Left colon (tissue), 2 donors: ENCODE measurements at regions of chr19 and their contacts with region 1.

Region 1: DNA sequence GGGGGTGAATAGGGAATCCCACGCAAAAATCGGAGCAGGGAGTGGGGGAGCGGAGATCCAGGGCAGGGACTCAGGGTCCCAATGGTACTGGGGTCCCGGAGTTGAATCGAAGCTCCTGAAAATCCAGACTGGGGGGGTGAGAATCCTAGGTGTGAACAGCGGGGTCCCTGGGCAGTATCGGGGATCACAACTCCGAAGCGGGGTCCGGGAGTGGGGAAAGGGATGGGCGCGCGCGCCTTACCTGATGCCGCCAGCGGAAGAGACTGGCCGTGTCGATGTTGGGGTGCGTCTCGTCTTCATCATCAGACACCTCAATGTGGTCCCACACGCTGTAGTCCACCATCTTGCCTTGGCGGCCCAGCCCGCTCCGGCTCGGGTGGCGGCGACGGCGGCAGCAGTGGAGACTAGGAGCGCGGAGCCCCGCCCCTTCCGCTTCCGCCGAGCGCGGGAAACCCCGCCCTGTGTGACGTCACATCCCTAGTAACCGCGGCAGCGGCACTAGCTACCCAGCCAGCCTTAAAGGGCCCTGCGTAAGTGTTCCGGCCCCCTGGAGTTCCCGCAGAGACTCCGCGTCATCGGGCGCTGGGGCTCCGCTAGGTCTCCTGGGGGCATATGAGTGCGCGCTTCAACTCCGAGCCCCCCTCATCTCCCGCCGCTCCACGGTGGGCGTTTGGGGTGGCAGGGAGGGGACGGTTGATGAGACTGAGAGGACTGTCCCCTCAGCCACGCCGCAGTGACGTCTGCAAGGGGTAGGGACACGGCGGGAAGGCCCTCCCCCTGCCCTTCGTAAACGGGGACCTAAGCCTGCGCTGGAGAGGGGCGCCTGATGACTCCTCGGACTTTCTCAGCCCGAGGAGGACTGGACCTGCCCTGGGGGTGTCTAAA is at the start of gene CDC37:
- DNase-seq: peak; percentile 95 to 99
- ATAC-seq: peak; percentile 90
- total RNA-seq, gene CDC37: 129 to 161 TPM

Region 2: DNA sequence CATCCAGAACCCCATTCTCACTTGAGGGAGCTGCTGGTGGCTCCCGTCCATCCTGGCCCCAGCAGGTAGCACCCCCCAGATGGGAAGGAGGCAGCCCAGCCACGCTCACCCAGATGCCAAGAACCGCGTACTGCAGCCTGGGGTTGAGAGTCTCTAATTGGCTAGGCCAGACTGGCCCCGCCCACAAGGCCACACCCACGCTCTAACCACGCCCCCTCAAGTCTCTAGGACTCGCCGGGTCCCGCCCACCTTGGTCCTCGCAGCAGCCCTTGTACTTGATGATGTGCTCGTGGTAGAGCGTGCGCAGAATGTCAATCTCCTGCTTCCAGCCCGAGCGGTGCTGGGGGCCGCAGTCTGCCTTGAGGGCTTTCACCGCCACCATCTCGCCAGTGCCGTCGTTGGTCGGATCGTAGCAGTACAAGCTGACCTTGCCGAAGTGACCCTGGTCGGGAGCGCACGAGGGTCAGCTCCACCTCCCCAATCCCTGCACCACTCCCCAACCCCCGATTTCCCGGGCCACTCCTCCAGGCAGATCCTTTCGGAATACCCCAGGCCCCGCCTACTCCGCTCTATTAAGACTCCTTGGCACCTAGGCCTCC is 49.5 kb before region 1 on chr19:
- intact Hi-C with region 1: no loop called
- DNase-seq: no peak
- ATAC-seq: peak; percentile 30

Region 3: GRCh38 chr19:10454267-10454666 is 50.9 kb after region 1 on chr19:
- intact Hi-C with region 1: no loop called
- DNase-seq: no peak
- ATAC-seq: no peak

Region 4: DNA sequence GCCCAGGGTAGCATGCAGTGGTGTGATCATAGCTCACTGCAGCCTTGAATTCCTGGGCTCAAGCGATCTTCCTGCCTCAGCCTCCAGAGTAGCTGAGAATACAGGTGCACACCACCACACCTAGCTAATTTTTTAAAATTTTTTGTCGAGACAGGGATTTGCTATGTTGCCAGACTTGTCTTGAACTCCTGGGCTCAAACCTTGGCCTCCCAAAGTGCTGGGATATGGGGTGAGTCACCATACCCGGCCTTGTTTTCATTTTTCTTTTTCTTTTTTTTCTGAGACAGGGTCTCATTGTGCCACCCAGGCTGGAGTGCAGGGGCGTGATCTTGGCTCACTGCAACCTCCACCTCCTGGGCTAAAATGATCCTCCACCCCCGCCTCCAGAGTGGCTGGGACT is 61.1 kb after region 1 on chr19:
- intact Hi-C with region 1: no loop called
- DNase-seq: no peak
- ATAC-seq: no peak

Region 5: GRCh38 chr19:10478903-10479384 is 75.6 kb after region 1 on chr19:
- intact Hi-C with region 1: loop called in 1 of 2 experiments (anchors 10 kb)
- DNase-seq: peak; percentile 85 to 90
- ATAC-seq: peak; percentile 82

Region 6: DNA sequence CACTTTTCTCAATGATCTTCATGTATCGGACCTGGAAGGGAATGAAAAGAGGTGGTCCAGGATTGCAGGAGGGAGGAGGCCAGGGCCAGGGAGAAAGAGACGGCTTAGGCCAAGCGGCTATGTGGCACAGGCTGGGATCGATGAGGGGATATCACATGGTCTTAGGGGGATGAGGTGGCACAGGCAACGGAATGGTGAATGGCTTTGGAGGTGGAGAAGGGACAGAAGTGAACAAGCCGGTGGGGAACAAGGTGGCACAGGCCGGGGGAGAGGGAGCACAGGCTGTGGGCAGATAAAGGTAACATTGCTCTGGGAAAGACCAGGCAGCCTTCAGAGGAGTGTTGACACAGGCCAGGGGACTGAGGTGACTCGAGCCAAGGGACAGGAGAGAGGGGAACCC is 171.1 kb after region 1 on chr19:
- intact Hi-C with region 1: no loop called
- DNase-seq: no peak
- ATAC-seq: no peak